PC-3 (cell line): ENCODE measurements at regions of chr1 and their contacts with region 1.

Region 1: DNA sequence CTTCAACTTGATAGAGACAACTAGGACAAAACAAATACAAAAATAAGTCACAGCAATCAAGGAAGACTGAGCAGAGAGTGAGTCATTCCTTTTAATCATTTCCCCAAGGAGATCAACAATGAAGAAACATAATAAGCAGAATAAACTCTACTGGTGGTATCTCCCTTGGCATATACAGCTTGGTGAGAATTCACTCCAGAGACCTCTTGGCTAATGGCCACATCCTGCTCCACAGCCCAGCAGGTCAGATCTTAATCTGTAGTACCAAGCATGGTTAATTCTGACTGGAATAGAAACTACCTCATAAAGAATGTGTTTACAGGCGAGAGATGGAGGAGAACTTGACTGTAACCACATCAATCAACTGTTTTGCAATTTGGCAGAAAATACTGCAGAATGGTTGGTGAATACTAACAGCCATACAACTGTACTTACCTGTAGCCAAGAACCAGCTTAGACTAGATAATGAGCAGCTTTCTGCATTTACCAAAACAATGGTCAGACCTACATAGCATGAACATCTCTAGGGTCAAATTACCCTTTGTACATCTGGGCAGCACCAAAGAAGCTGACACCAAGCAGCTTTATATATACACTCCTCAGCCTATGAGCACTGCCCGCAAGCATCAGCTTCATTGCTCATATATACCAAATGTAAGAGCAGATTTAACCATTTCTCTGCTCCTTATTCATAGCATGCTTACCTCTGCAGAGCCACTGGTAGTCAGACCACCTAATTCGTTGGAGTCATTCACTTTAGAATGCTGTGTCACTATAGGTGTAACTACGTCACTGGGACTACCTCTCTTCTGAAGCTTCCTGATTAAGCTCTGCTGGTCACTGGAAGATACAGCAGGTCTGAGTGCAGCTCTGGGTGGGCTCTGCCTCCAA is 51.0 kb downstream of the KIAA0319L start:
- DNase-seq: peak; percentile 96
- ATAC-seq: peak; percentile 89
- H3K4me3 ChIP-seq: no peak overlapping the region
- H3K27ac ChIP-seq: peak overlapping the region; percentile 90
- H3K4me1 ChIP-seq: peaks cover 32% of the 10 kb centered on the region
- H3K27me3 ChIP-seq: no peaks in the 10 kb centered on the region
- CTCF ChIP-seq: no peak

Region 2: GRCh38 chr1:35443768-35444518 is 62.2 kb before region 1 on chr1:
- CTCF ChIA-PET with region 1: no interaction called
- POLR2A ChIA-PET with region 1: no interaction called
- intact Hi-C with region 1: no loop called
- DNase-seq: peak; percentile 14
- ATAC-seq: no peak
- H3K4me3 ChIP-seq: no peak overlapping the region
- H3K27ac ChIP-seq: no peak overlapping the region
- H3K4me1 ChIP-seq: peaks cover 31% of the 10 kb centered on the region
- H3K27me3 ChIP-seq: no peaks in the 10 kb centered on the region
- CTCF ChIP-seq: peak; percentile 35; the same call in 1 of the 2 replicates

Region 3: DNA sequence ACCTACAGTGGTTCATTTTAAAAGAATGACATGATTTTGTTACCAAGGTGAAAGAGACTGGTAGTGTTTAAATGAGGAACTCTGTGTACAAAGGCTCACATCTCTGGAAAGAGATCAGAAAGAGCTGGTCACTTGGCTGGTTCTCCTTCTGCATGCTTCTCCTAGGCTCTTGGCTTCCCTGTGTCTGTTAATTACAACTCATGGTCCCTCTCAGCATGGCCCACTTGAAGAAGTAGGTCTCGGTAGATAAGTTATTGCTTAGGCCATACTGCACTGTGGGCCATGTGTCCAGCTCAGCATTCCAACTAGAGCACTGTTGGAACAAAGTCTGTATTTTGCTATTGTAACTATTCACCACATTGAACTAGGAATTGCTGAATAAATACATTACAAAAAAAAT is 40.0 kb before region 1 on chr1:
- CTCF ChIA-PET with region 1: no interaction called
- POLR2A ChIA-PET with region 1: no interaction called
- intact Hi-C with region 1: loop called (anchors 5 kb)
- DNase-seq: no peak
- ATAC-seq: no peak
- H3K4me3 ChIP-seq: no peak overlapping the region
- H3K27ac ChIP-seq: no peak overlapping the region
- H3K4me1 ChIP-seq: peaks cover 31% of the 10 kb centered on the region
- H3K27me3 ChIP-seq: no peaks in the 10 kb centered on the region
- CTCF ChIP-seq: no peak

Region 4: GRCh38 chr1:35544978-35545377 is 38.8 kb after region 1 on chr1:
- CTCF ChIA-PET with region 1: no interaction called
- POLR2A ChIA-PET with region 1: no interaction called
- intact Hi-C with region 1: loop called (anchors 1 kb)
- DNase-seq: peak; percentile 37
- ATAC-seq: no peak
- H3K4me3 ChIP-seq: no peak overlapping the region
- H3K27ac ChIP-seq: no peak overlapping the region
- H3K4me1 ChIP-seq: peaks cover 17% of the 10 kb centered on the region
- H3K27me3 ChIP-seq: no peaks in the 10 kb centered on the region
- CTCF ChIP-seq: peak; percentile 49

Region 5: GRCh38 chr1:35557292-35558063 is 51.3 kb after region 1 on chr1 and contains the starts of genes KIAA0319L and NCDN:
- CTCF ChIA-PET with region 1: no interaction called
- POLR2A ChIA-PET with region 1: no interaction called
- intact Hi-C with region 1: loop called (anchors 1 kb)
- DNase-seq: peak; percentile 94
- ATAC-seq: peak; percentile 76
- H3K4me3 ChIP-seq: peak within 1 kb of the TSS; percentile 78
- H3K27ac ChIP-seq: peak within 1 kb of the TSS; percentile 91
- H3K4me1 ChIP-seq: peaks cover 33% of the 10 kb centered on the region
- H3K27me3 ChIP-seq: no peaks in the 10 kb centered on the region
- CTCF ChIP-seq: no peak
- total RNA-seq, gene KIAA0319L: 20.9 and 26.7 TPM in 2 replicates
- total RNA-seq, gene NCDN: 25.2 and 30.2 TPM in 2 replicates

Region 6: GRCh38 chr1:35641233-35641866 is 135.2 kb after region 1 on chr1 and contains the start of gene PSMB2:
- CTCF ChIA-PET with region 1: no interaction called
- POLR2A ChIA-PET with region 1: no interaction called
- intact Hi-C with region 1: no loop called
- DNase-seq: peak; percentile 98
- ATAC-seq: peak; percentile 86
- H3K4me3 ChIP-seq: peak within 1 kb of the TSS; percentile 95
- H3K27ac ChIP-seq: peak within 1 kb of the TSS; percentile 79
- H3K4me1 ChIP-seq: peaks cover 22% of the 10 kb centered on the region
- H3K27me3 ChIP-seq: no peaks in the 10 kb centered on the region
- CTCF ChIP-seq: no peak
- total RNA-seq, gene PSMB2: 61.2 and 88.7 TPM in 2 replicates